Activated B cell treated with CpG ODN at 0.5 μM for 24 hours (primary cell): ENCODE measurements at regions of chr13 and their contacts with region 1.

Region 1: GRCh38 chr13:98022210-98022609 is 68.7 kb downstream of the IPO5 start:
- DNase-seq: no peak
- ATAC-seq: no peak
- H3K4me3 Mint-ChIP-seq: no peak overlapping the region
- H3K27ac Mint-ChIP-seq: no peak overlapping the region
- H3K4me1 Mint-ChIP-seq: no peaks in the 10 kb centered on the region
- H3K27me3 Mint-ChIP-seq: no peaks in the 10 kb centered on the region
- CTCF ChIP-seq: no peak

Region 2: DNA sequence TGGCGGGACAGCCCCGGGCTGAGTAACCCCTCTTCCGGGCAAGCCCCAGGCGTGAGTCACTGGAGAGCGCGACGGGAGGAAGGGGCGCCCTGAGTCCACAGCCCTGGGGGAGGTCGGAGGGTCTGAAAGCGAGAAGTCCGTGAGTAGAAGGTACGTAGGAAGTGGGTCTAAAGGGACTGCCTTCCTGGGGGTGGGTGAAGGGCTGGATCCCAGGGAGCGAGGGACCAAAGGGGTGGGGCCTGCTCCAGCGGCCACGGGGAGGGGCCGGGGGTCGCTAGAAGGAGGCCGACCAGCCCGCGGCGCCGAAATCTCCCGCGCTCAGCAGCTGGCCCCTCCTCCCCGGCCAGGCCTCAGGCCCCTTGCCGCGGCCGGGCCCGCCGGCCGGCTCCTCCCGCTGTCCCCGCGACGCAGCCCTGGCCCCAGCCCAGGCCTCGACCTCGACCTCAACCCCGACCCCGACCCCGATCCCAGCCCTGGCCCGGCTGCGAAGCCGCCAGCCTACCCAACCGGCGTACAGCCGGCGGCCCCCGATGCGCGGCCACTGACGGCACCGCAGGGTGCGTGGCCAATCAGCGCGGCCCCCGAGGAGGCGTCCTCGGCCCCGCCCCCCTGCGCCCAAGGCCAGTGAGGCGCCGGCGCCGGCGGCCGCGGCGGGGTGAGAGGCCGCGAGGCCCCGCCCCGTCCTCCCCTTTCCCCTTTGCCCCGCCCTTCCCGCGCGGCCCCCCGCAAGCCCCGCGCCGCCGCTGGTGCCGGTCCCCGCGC is 46.2 kb before region 1 on chr13:
- CTCF ChIA-PET with region 1: no interaction called
- POLR2A ChIA-PET with region 1: no interaction called
- intact Hi-C with region 1: no loop called
- DNase-seq: peak; percentile 95
- ATAC-seq: peak; percentile 91
- H3K4me3 Mint-ChIP-seq: peak overlapping the region; percentile 92
- H3K27ac Mint-ChIP-seq: peak overlapping the region; percentile 94
- H3K4me1 Mint-ChIP-seq: peaks cover 39% of the 10 kb centered on the region
- H3K27me3 Mint-ChIP-seq: no peaks in the 10 kb centered on the region
- CTCF ChIP-seq: no peak

Region 3: DNA sequence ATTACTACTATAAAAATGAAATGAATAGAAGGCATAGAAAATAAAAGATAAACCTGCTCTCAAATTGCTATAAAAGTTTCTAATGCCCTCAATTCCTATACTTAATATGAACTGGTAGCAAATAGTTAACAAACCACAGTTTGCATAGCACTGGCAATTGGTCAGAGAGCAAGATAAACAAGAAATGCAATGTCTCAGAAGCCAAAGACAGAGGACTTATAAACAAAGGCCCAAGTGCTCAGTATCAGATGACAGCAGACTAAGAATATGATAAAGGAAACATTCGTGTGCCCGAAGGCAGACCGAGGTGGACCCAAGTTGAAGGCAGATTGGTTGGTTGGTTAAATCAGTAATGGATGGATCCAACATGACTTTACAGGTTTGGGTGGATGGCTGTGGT is 18.1 kb before region 1 on chr13:
- CTCF ChIA-PET with region 1: no interaction called
- POLR2A ChIA-PET with region 1: no interaction called
- intact Hi-C with region 1: loop called (anchors 1 kb)
- DNase-seq: no peak
- ATAC-seq: no peak
- H3K4me3 Mint-ChIP-seq: no peak overlapping the region
- H3K27ac Mint-ChIP-seq: no peak overlapping the region
- H3K4me1 Mint-ChIP-seq: no peaks in the 10 kb centered on the region
- H3K27me3 Mint-ChIP-seq: no peaks in the 10 kb centered on the region
- CTCF ChIP-seq: no peak

Region 4: DNA sequence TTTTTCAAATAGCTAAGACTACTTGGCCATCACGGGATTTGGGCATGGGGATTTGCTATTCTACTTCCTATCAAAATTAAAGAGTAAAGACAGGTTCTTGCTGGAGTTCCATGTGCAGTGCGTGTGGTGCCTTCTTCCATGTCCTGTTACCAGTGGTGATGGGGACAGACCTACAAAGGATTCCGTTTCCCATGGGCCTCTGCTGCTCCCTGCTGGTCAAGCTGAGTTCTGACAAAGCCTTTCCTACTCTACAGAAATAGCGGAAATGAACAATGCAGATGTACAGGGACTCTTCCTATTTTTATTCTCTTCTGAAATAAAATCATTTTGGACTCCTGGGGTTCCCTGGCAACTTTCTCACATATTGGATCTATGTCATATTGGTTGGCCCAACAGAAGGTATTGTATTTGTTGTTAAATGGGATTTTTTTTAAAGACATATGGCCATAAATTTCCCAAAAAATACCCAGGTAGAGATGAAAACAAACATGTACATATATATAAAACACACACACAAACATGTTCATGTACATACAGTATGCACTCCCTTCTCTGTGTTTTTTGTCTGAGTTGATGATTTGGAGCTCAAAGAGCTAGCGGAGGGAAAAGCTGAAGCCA is 820.8 kb after region 1 on chr13:
- CTCF ChIA-PET with region 1: no interaction called
- POLR2A ChIA-PET with region 1: no interaction called
- intact Hi-C with region 1: loop called (anchors 5 kb)
- DNase-seq: peak; percentile 34
- ATAC-seq: peak; percentile 86
- H3K4me3 Mint-ChIP-seq: no peak overlapping the region
- H3K27ac Mint-ChIP-seq: no peak overlapping the region
- H3K4me1 Mint-ChIP-seq: no peaks in the 10 kb centered on the region
- H3K27me3 Mint-ChIP-seq: no peaks in the 10 kb centered on the region
- CTCF ChIP-seq: peak; percentile 37